MCF 10A (cell line): ENCODE measurements at regions of chr9 and their contacts with region 1.

Region 1: GRCh38 chr9:99162759-99163364 is 57.9 kb downstream of the TGFBR1 start:
- DNase-seq: peak; percentile 48
- H3K4me3 Mint-ChIP-seq: no peak overlapping the region
- H3K27ac Mint-ChIP-seq: no peak overlapping the region
- H3K4me1 Mint-ChIP-seq: no peaks in the 10 kb centered on the region
- H3K27me3 Mint-ChIP-seq: peaks cover 13% of the 10 kb centered on the region
- CTCF ChIP-seq: peak; percentile 51

Region 2: GRCh38 chr9:99173570-99174504 is 11.0 kb after region 1 on chr9:
- CTCF ChIA-PET with region 1: interaction called, 21 read pairs
- POLR2A ChIA-PET with region 1: no interaction called
- intact Hi-C with region 1: no loop called
- DNase-seq: no peak
- H3K4me3 Mint-ChIP-seq: no peak overlapping the region
- H3K27ac Mint-ChIP-seq: no peak overlapping the region
- H3K4me1 Mint-ChIP-seq: peaks cover 6% of the 10 kb centered on the region
- H3K27me3 Mint-ChIP-seq: peaks cover 27% of the 10 kb centered on the region
- CTCF ChIP-seq: no peak